ENCODE measurements at regions of chr4 and their contacts with region 1.

Region 1: GRCh38 chr4:153153339-153153871 is 50.8 kb upstream of the TRIM2 start:
- DNase-seq: peak; percentile 70
- H3K4me3 Mint-ChIP-seq: peak overlapping the region; percentile 82
- H3K27ac Mint-ChIP-seq: peak overlapping the region; percentile 67
- H3K4me1 Mint-ChIP-seq: peaks cover 59% of the 10 kb centered on the region
- H3K27me3 Mint-ChIP-seq: peaks cover 42% of the 10 kb centered on the region

Region 2: GRCh38 chr4:152831416-152831815 is 322.0 kb before region 1 on chr4:
- intact Hi-C with region 1: no loop called
- DNase-seq: no peak
- H3K4me3 Mint-ChIP-seq: no peak overlapping the region
- H3K27ac Mint-ChIP-seq: no peak overlapping the region
- H3K4me1 Mint-ChIP-seq: no peaks in the 10 kb centered on the region
- H3K27me3 Mint-ChIP-seq: no peaks in the 10 kb centered on the region

Region 3: GRCh38 chr4:153083447-153083947 is 69.9 kb before region 1 on chr4:
- intact Hi-C with region 1: no loop called
- DNase-seq: peak; percentile 11
- H3K4me3 Mint-ChIP-seq: no peak overlapping the region
- H3K27ac Mint-ChIP-seq: no peak overlapping the region
- H3K4me1 Mint-ChIP-seq: peaks cover 19% of the 10 kb centered on the region
- H3K27me3 Mint-ChIP-seq: peaks cover 28% of the 10 kb centered on the region

Region 4: DNA sequence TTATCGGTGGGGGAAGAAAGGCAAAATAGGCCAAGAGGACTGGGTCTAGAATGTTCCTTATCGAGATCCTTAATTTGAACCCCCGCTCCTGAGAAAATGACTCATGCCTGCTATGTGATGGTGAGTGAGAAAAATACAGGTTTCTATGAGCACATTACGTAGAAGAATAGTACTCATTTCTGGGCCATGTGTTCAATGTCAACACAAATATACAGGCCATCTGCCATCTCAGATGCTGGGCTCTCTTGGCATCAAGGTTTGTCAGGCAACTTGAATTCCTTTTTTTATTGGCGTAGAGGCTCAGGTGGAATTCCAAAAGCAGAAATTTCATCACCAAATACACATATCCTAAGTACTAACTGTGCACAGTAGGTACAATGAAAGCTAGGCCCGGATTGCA is 30.6 kb before region 1 on chr4:
- intact Hi-C with region 1: no loop called
- DNase-seq: no peak
- H3K4me3 Mint-ChIP-seq: no peak overlapping the region
- H3K27ac Mint-ChIP-seq: no peak overlapping the region
- H3K4me1 Mint-ChIP-seq: no peaks in the 10 kb centered on the region
- H3K27me3 Mint-ChIP-seq: peaks cover 12% of the 10 kb centered on the region

Region 5: GRCh38 chr4:153137159-153137558 is 16.2 kb before region 1 on chr4:
- intact Hi-C with region 1: loop called (anchors 1 kb)
- DNase-seq: no peak
- H3K4me3 Mint-ChIP-seq: no peak overlapping the region
- H3K27ac Mint-ChIP-seq: no peak overlapping the region
- H3K4me1 Mint-ChIP-seq: peaks cover 26% of the 10 kb centered on the region
- H3K27me3 Mint-ChIP-seq: peaks cover 22% of the 10 kb centered on the region

Region 6: GRCh38 chr4:153142700-153143438 is 10.5 kb before region 1 on chr4:
- intact Hi-C with region 1: loop called (anchors 1 kb)
- DNase-seq: no peak
- H3K4me3 Mint-ChIP-seq: no peak overlapping the region
- H3K27ac Mint-ChIP-seq: no peak overlapping the region
- H3K4me1 Mint-ChIP-seq: no peaks in the 10 kb centered on the region
- H3K27me3 Mint-ChIP-seq: peaks cover 22% of the 10 kb centered on the region

Region 7: GRCh38 chr4:153221783-153222706 is 68.6 kb after region 1 on chr4:
- intact Hi-C with region 1: loop called (anchors 5 kb)
- DNase-seq: no peak
- H3K4me3 Mint-ChIP-seq: peak overlapping the region; percentile 77
- H3K27ac Mint-ChIP-seq: no peak overlapping the region
- H3K4me1 Mint-ChIP-seq: peaks cover 30% of the 10 kb centered on the region
- H3K27me3 Mint-ChIP-seq: peaks cover 44% of the 10 kb centered on the region

Region 8: DNA sequence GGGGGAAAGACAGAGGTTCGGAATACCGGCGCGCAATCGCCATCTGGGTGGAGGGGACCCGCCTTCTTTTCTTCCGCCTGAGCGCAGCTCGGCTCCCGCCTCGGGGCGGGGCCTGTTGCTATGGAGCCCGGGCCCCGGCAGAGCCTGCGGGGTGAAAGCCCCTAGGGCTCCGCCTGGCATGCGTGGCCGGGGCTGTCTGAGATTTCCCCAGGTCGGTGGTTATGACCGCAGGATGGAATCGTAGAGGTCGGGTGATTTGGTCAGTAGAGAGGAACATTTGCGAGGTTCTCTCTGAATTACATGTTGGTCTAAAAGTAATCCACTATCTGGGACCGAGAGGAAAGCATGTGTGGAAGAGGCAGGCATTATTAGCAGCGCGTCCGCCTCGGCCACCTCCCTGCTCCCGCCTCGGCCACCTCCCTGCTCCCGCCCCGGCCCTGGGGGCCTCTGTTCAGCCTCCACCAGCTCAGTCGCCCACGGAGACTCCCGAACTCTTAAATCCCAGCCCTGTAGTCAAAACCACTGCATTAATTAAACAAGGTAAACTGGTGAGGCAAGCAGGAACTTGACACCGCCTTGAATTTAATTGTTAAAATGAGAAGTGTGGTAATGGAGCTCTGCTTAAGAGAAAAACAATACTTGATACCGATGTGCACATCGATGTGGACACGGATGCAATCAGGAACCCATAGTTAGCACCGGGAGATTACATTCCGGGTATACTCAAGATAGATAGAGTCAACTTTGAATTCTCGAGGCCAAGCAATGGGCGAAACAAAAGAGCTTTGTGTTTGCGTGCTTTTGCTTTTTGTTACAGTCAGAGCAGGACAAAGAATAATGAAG is 96.0 kb after region 1 on chr4:
- intact Hi-C with region 1: loop called (anchors 2 kb)
- DNase-seq: peak; percentile 79
- H3K4me3 Mint-ChIP-seq: peak overlapping the region; percentile 86
- H3K27ac Mint-ChIP-seq: peak overlapping the region; percentile 71
- H3K4me1 Mint-ChIP-seq: peaks cover 23% of the 10 kb centered on the region
- H3K27me3 Mint-ChIP-seq: peaks cover 11% of the 10 kb centered on the region

Region 9: DNA sequence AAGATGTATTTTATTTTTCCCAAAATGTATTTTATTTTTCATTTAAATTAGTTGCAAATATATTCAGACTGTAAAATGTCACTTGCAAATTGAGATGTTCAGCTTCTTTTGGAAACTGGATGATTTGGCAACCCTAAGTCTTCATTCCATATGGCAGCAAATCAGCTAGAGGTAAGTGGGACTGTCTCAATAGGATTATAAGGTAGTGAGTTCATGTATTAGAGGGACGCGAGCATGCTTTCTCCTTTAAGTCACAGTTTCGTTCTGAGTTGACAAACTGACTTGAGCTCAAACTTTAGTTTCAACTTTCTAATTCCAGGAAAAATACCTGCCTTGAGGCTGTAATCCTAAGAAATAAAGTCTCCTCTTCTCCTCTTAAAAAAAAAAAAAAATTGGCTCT is 268.5 kb after region 1 on chr4:
- intact Hi-C with region 1: loop called (anchors 5 kb)
- DNase-seq: no peak
- H3K4me3 Mint-ChIP-seq: no peak overlapping the region
- H3K27ac Mint-ChIP-seq: no peak overlapping the region
- H3K4me1 Mint-ChIP-seq: peaks cover 41% of the 10 kb centered on the region
- H3K27me3 Mint-ChIP-seq: no peaks in the 10 kb centered on the region